ENCODE measurements at regions of chr19 and their contacts with region 1.

Region 1: DNA sequence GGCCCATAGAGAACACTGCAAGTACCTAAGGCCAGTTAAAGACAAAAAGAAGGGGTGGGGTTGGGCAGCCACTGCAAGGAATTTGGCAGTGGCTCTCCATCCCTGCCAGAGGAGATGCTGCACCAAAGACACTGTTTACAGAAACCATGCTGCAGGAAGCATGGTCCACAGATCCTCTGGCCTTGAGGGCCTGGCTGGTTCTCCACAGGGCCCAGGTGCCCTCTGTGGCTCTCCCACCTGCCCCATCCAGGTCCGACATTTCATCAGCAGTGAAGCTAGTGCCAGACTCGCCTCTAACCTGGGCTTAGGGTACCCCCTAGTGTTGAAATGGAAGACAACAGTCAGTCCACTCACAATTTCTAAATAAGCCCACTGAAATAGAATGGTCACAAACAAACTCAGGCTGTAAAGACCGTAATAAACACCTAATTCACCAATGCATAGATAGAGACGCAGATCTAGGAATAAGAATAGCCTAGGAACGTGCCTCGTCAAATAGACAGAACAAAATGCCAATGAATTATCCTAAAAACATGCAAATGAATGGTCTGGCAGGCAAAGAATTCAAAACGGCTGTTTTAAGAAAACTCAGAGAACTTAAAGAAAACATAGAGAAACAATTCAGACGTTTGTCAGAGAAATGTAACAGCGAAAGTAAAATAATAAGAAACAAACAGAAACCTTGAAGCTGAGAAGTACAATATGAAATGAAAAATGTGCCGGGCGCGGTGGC is 23.3 kb downstream of the LYPD4 start:
- DNase-seq: peak; percentile 41
- H3K4me3 ChIP-seq: no peak overlapping the region
- H3K27ac ChIP-seq: no peak overlapping the region
- H3K4me1 ChIP-seq: no peaks in the 10 kb centered on the region
- H3K27me3 ChIP-seq: peaks cover 19% of the 10 kb centered on the region
- CTCF ChIP-seq: peak; percentile 42 to 76 (median 60)
- EP300 ChIP-seq: no peak
- POLR2A ChIP-seq: no peak

Region 2: DNA sequence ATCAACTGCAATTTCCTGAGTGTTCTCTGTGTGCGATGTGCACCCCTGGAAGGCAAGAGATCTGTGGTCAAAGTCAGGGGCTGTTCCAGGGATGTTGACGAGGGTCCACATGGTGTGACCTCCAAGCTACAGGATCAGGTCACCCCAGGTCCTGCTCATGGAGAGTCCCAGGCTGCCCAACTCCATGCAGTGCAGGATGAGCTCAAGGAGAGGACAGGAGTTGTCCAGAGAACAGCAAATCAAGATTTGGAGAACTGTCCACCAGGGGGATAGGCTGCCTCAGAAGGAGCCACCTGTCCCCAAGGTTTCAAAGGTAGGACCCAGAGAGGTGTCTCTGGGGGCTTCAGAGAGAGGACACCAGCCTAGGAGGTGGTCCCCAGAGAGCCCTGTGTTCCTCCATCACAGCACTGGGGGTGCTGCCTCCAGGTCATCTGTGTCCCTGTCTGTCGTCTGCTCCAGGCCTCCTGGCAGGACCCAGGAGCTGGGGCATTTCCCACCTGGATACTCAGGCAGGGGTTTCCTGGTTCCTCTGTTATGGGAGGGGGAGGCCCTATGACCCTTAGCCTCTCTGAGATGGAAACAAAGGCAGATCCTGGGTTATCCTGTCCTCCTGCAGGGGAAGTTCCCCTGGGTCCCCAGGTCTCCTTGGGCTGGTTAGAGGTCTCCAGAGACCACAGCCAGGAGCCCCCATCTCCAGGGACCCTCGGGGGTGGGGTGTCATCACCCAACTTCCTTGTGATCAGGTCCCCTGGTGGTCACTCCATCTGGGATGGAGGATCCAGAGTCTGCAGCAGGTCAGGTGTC is 131.0 kb before region 1 on chr19:
- in situ Hi-C with region 1: loop called in 1 of 4 experiments (anchors 10 kb)
- intact Hi-C with region 1: no loop called
- DNase-seq: no peak
- H3K4me3 ChIP-seq: no peak overlapping the region
- H3K27ac ChIP-seq: no peak overlapping the region
- H3K4me1 ChIP-seq: no peaks in the 10 kb centered on the region
- H3K27me3 ChIP-seq: no peaks in the 10 kb centered on the region
- CTCF ChIP-seq: no peak
- EP300 ChIP-seq: no peak
- POLR2A ChIP-seq: no peak

Measured in transverse colon (tissue), 4 donors.